ENCODE measurements at regions of chr12 and their contacts with region 1.

Region 1: GRCh38 chr12:64222009-64222765 is at the start of gene KICS2:
- DNase-seq: peak; percentile 94
- H3K4me3 Mint-ChIP-seq: peak within 1 kb of the TSS; percentile 83
- H3K27ac Mint-ChIP-seq: peak within 1 kb of the TSS; percentile 84
- H3K4me1 Mint-ChIP-seq: peaks cover 20% of the 10 kb centered on the region
- H3K27me3 Mint-ChIP-seq: peaks cover 2% of the 10 kb centered on the region
- total RNA-seq, gene KICS2: 12.4 to 14.1 TPM

Region 2: GRCh38 chr12:62426089-62426488 is 1796.1 kb before region 1 on chr12:
- CTCF ChIA-PET with region 1: no interaction called
- POLR2A ChIA-PET with region 1: no interaction called
- intact Hi-C with region 1: no loop called
- DNase-seq: no peak
- H3K4me3 Mint-ChIP-seq: no peak overlapping the region
- H3K27ac Mint-ChIP-seq: no peak overlapping the region
- H3K4me1 Mint-ChIP-seq: no peaks in the 10 kb centered on the region
- H3K27me3 Mint-ChIP-seq: peaks cover 6% of the 10 kb centered on the region

Region 3: GRCh38 chr12:63779498-63780481 is 442.4 kb before region 1 on chr12 and contains the start of gene RXYLT1:
- CTCF ChIA-PET with region 1: no interaction called
- POLR2A ChIA-PET with region 1: no interaction called
- intact Hi-C with region 1: loop called (anchors 5 kb)
- DNase-seq: peak; percentile 90
- H3K4me3 Mint-ChIP-seq: peak within 1 kb of the TSS; percentile 93
- H3K27ac Mint-ChIP-seq: peak within 1 kb of the TSS; percentile 88
- H3K4me1 Mint-ChIP-seq: peaks cover 10% of the 10 kb centered on the region
- H3K27me3 Mint-ChIP-seq: no peaks in the 10 kb centered on the region
- total RNA-seq, gene RXYLT1: 14.0 to 14.3 TPM

Region 4: GRCh38 chr12:64194333-64195149 is 27.6 kb before region 1 on chr12:
- CTCF ChIA-PET with region 1: no interaction called
- POLR2A ChIA-PET with region 1: no interaction called
- intact Hi-C with region 1: no loop called
- DNase-seq: no peak
- H3K4me3 Mint-ChIP-seq: no peak overlapping the region
- H3K27ac Mint-ChIP-seq: no peak overlapping the region
- H3K4me1 Mint-ChIP-seq: peaks cover 8% of the 10 kb centered on the region
- H3K27me3 Mint-ChIP-seq: no peaks in the 10 kb centered on the region

Region 5: GRCh38 chr12:64385468-64385867 is 163.3 kb after region 1 on chr12:
- CTCF ChIA-PET with region 1: no interaction called
- POLR2A ChIA-PET with region 1: no interaction called
- intact Hi-C with region 1: no loop called
- DNase-seq: peak; percentile 65
- H3K4me3 Mint-ChIP-seq: no peak overlapping the region
- H3K27ac Mint-ChIP-seq: peak overlapping the region; percentile 52
- H3K4me1 Mint-ChIP-seq: peaks cover 31% of the 10 kb centered on the region
- H3K27me3 Mint-ChIP-seq: no peaks in the 10 kb centered on the region

Region 6: DNA sequence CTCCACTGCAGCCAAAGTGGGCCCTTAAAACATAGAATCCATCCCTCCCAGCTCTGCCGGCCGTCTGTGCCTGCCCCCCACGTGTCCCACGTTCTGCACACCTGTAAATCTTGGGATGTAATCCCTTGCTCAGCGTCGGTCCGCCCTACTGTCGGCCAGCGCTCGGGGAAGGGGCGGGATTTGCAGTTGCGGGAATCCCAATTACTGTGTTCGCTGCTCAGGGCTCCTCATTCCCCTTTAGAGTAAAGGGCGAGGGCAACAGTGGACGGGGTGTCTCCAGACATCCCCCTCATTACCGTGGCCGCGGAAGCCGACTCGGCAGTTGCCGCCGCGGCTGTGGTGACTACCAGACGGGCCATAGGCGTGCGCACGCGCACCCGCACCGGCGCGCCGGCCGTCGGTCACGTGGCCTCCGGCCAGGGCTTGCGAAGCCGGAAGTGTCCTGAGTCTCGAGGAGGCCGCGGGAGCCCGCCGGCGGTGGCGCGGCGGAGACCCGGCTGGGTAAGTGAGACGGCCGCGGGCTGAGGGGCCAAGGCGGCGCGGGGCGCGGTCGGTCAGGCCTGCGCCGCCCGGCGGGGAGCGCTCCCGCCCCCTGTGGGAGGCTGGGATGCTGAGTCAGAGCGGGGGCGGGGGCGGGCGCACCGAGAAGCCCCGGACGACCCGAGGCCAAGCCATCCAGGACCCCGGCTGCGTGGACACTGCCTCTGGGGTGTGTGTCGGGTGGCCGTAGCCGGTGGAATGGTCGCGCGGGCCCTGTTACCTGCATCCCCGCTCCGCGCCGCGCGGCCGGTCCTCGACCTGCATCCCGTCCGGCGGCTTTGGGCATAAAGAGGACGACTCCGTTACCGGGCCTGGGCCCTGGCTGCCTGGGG is 229.7 kb after region 1 on chr12 and contains the start of gene TBK1:
- CTCF ChIA-PET with region 1: no interaction called
- POLR2A ChIA-PET with region 1: no interaction called
- intact Hi-C with region 1: loop called (anchors 2 kb)
- DNase-seq: peak; percentile 77
- H3K4me3 Mint-ChIP-seq: peak within 1 kb of the TSS; percentile 96
- H3K27ac Mint-ChIP-seq: peak within 1 kb of the TSS; percentile 95
- H3K4me1 Mint-ChIP-seq: peaks cover 42% of the 10 kb centered on the region
- H3K27me3 Mint-ChIP-seq: no peaks in the 10 kb centered on the region
- total RNA-seq, gene TBK1: 21.7 to 23.4 TPM

Measured in activated CD4-positive, alpha-beta memory T cell treated with anti-CD3 and anti-CD28 coated beads for 36 hours (primary cell).